Dendritic cell treated with granulocyte-macrophage colony-stimulating factor and Interleukin-4, amounts not matched to agents 40 ng/mL and 50 ng/mL, for 4 days (primary cell): ENCODE measurements at regions of chr10 and their contacts with region 1.

Region 1: GRCh38 chr10:112852306-112852705 is 97.7 kb upstream of the TCF7L2 start:
- H3K4me3 Mint-ChIP-seq: no peak overlapping the region
- H3K27ac Mint-ChIP-seq: peak overlapping the region; percentile 9
- H3K4me1 Mint-ChIP-seq: peaks cover 49% of the 10 kb centered on the region
- H3K27me3 Mint-ChIP-seq: peaks cover 89% of the 10 kb centered on the region

Region 2: DNA sequence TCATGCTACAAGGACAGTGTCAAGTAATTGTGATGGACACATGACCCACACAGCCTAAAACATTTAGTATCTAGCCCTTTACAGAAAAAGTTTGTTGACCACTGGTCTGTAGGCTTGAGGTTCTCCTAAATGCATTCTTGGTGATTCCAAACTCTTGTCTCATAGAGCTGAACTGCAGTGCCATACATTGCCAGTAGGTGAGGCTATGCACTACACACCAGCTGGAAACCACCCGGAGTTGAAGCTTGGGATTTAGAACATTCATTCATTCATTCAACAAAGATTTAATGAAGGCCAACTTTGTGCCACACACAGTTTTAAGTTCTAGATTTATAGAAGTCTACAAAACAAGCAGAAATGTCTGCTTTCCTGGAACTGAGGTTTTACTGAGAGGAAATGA is 20.4 kb after region 1 on chr10:
- intact Hi-C with region 1: no loop called
- H3K4me3 Mint-ChIP-seq: no peak overlapping the region
- H3K27ac Mint-ChIP-seq: no peak overlapping the region
- H3K4me1 Mint-ChIP-seq: peaks cover 11% of the 10 kb centered on the region
- H3K27me3 Mint-ChIP-seq: peaks cover 52% of the 10 kb centered on the region

Region 3: DNA sequence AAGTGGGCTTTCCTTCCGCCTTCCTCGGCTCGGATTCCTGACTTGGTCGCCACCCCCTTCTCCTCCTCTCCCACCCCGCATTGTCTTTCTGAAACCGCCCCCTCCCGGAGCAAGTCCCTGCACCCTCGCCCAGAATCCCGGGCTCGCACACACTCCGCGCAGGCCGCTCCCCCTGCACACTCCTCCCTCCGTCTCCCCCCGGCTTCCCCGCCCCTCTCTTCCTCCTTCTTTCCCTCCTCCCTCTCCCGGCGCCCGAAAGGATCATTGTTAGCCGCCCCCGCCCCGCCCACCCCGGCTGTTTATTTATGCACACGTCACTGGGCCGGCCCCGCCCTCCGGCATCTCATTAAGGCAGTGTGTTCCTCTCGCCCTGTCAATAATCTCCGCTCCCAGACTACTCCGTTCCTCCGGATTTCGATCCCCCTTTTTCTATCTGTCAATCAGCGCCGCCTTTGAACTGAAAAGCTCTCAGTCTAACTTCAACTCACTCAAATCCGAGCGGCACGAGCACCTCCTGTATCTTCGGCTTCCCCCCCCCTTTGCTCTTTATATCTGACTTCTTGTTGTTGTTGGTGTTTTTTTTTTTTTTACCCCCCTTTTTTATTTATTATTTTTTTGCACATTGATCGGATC is 97.7 kb after region 1 on chr10 and contains the start of gene TCF7L2:
- intact Hi-C with region 1: loop called (anchors 5 kb)
- H3K4me3 Mint-ChIP-seq: peak within 1 kb of the TSS; percentile 87
- H3K27ac Mint-ChIP-seq: peak within 1 kb of the TSS; percentile 92
- H3K4me1 Mint-ChIP-seq: peaks cover 61% of the 10 kb centered on the region
- H3K27me3 Mint-ChIP-seq: peaks cover 57% of the 10 kb centered on the region

Region 4: GRCh38 chr10:113326160-113327111 is 474.1 kb after region 1 on chr10:
- intact Hi-C with region 1: loop called (anchors 5 kb)
- H3K4me3 Mint-ChIP-seq: no peak overlapping the region
- H3K27ac Mint-ChIP-seq: no peak overlapping the region
- H3K4me1 Mint-ChIP-seq: peaks cover 53% of the 10 kb centered on the region
- H3K27me3 Mint-ChIP-seq: peaks cover 67% of the 10 kb centered on the region